GM12878 (cell line): ENCODE measurements at regions of chr18 and their contacts with region 1.

Region 1: DNA sequence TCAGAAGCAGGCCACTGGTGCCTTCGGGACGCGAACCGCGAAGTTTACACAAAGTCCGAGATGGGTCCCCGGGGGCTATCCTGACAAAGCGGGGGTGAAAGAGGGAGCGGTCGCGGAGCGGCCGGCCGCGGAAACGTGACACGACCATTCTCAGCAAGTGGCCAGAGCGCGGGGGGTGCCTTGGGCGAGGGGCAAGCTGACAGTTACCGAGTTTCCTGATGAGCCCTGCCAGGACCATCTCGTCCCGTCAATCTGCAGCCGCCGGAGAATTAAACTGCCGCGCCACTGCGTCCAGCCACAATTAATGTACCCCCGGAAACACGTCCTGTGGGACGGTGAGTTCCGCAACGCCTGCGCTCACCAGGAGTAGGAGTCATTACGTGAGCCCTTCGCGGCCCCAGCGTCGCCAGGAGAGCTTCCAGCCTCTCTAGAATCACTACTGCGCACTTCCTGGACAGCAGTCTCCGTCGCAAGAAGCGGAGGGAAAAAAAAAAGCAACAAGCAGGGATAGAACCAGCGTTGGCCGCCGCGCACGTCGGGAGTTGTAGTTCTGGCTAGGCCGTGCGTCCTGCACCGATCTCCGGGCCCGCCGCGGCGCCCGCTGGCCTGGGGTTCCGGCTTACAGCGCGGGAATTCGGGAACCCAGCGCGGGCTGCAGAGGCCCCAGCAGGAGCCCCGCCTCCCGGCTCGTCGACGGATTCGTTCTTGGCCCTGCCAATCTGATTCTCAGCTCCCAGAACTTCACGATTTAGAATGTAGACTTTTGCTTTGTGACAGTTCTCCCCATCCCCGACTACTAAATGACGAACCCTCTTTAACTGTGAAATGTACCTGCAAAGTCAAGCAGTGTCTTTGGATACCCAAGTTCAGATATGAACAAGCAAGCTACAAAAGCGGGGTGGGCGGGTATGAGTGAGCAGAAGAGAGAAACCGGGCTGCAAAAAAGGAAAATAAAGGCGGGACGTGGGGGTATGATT is at the start of gene RTTN:
- DNase-seq: peak; percentile 85
- ATAC-seq: peak; percentile 98
- H3K4me3 ChIP-seq: peak within 1 kb of the TSS; percentile 91
- H3K27ac ChIP-seq: peak within 1 kb of the TSS; percentile 95
- H3K4me1 ChIP-seq: no peaks in the 10 kb centered on the region; the same call in 1 of the 2 replicates
- H3K27me3 ChIP-seq: no peaks in the 10 kb centered on the region
- CTCF ChIP-seq: no peak
- EP300 ChIP-seq: no peak
- POLR2A ChIP-seq: peak; percentile 83
- RAD21 ChIP-seq: no peak
- polyA plus RNA-seq, gene RTTN: 9.4 to 12.3 TPM

Region 2: GRCh38 chr18:68714609-68715496 is 1490.9 kb before region 1 on chr18 and contains the start of gene TMX3:
- CTCF ChIA-PET with region 1: no interaction called
- POLR2A ChIA-PET with region 1: no interaction called
- RAD21 ChIA-PET with region 1: no interaction called
- SMC1A ChIA-PET with region 1: no interaction called
- in situ Hi-C with region 1: loop called (anchors 10 kb)
- intact Hi-C with region 1: loop called (anchors 10 kb)
- DNase-seq: peak; percentile 82
- ATAC-seq: peak; percentile 98
- H3K4me3 ChIP-seq: peak within 1 kb of the TSS; percentile 89
- H3K27ac ChIP-seq: peak within 1 kb of the TSS; percentile 71
- H3K4me1 ChIP-seq: peaks cover 5% of the 10 kb centered on the region; the same call in 1 of the 2 replicates
- H3K27me3 ChIP-seq: no peaks in the 10 kb centered on the region
- CTCF ChIP-seq: no peak
- EP300 ChIP-seq: no peak
- POLR2A ChIP-seq: peak; percentile 79
- RAD21 ChIP-seq: no peak
- polyA plus RNA-seq, gene TMX3: 14.2 to 16.4 TPM

Region 3: GRCh38 chr18:70288851-70289328 is 83.2 kb after region 1 on chr18 and contains the start of gene SOCS6:
- CTCF ChIA-PET with region 1: no interaction called
- POLR2A ChIA-PET with region 1: no interaction called
- RAD21 ChIA-PET with region 1: no interaction called
- SMC1A ChIA-PET with region 1: no interaction called
- in situ Hi-C with region 1: no loop called
- intact Hi-C with region 1: loop called (anchors 2 kb)
- DNase-seq: no peak
- ATAC-seq: peak; percentile 74
- H3K4me3 ChIP-seq: peak within 1 kb of the TSS; percentile 76
- H3K27ac ChIP-seq: peak within 1 kb of the TSS; percentile 52
- H3K4me1 ChIP-seq: peaks cover 5% of the 10 kb centered on the region
- H3K27me3 ChIP-seq: no peaks in the 10 kb centered on the region; a peak in 1 of 4 replicates
- CTCF ChIP-seq: no peak
- EP300 ChIP-seq: no peak
- POLR2A ChIP-seq: peak; percentile 85
- RAD21 ChIP-seq: no peak
- polyA plus RNA-seq, gene SOCS6: 1.6 to 1.8 TPM